ENCODE measurements at regions of chr20 and their contacts with region 1.

Region 1: GRCh38 chr20:3045816-3046676 is at the start of gene MRPS26:
- DNase-seq: peak; percentile 72 to 96 (median 92)

Region 2: DNA sequence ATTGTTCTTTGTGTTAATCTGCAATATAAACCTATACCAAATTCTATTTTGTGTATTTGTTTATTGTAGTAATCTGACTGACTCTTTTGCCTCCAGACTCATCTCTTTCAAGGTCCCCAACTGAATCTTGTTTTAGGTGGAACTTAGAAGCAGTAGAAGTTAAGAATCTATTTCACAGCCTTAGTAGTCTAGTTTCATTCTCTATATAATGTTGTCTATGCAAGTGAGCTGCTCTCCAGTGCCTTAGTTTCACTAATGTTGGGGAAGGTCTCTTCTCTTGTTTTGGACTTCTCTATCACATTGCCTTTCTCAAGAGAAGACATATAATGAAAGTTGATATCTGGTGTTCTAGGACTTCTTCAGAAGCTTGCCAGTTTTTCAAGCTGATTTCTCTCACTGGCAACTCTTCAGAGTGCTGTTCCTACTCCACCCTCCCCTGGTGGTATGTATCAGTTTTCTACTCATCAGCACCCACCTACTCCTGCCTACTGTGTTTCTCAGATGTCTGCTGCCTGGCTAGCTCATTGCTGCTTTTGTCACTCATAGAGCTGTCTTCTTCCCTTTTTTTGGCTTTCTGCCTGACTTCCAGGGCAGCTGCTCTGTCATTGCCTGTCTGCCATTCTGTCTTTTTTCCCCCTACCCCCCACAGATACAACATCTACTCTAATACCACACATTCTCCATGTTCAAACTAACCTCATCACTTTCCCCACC is 90.6 kb before region 1 on chr20:
- intact Hi-C with region 1: no loop called
- DNase-seq: peak in 26 of 42 donors; percentile 8 to 79 (median 31)

Region 3: DNA sequence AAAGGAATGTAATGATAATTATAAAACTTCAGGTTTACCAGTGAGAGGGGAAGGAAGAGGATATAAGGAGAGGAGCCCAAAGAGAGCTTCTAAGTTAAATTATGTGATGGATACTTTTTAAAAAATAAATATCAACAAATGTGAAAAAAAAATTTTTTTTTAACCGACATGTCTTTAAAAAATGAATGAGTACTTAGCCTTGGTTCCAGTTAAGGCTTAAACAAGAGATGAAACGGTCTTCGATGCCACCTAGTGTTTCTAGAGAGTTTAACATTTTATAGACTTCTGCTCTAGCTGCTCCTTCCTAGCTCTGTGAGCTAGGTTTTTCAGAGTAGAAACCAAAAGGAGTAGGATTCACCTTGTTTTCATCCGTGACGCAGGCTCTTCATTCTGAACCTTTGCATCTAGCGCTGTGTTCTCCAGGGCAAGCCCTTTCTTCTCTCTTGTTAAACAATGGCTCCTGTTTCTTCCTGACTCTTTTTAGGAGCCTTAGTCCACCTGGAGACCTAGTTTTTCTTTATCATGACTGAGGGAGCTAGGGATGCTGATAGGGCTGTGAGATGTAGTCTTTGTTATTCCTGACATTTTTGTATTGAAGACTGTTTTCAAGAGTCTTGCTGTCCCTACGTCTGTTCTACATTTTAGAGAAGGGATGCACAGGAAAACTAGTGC is 45.1 kb before region 1 on chr20:
- intact Hi-C with region 1: no loop called
- DNase-seq: peak in 17 of 42 donors; percentile 3 to 70 (median 19)

Region 4: DNA sequence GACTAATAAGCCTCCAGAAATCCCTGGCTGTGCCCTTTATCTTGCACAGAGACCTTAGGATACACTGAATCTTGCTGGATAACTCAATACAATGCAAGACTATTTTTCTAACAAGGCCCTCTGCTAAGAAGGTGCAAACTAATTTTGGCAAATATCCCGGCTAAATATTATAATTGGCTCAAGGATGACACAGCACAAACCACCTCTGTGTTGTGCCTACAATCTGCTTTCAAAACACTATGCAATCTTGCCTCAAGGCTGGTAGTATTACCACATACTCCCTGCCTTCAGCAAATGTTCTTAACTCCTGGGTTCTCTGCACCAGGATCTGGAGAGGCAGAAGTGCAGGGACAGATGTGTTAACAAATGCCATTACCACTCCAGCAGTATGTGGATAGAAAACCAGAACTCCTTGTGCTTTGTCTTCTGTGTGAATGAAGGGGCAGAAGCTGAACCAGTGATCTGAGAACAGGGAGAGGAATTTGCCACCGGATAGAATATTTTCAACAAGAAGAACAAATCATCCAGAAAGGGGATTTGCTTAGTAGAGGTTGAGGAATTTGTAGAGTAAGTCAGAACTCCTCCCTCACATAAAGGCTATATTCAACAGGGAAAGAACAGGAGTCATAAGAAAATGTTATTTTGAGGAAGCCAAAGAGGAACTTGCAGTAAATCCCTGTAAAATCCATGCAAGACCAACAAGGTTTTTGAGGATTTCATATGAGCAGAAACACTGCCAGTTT is 267.1 kb after region 1 on chr20:
- intact Hi-C with region 1: loop called (anchors 10 kb)
- DNase-seq: peak in 2 of 42 donors; percentile 13 to 44

Region 5: DNA sequence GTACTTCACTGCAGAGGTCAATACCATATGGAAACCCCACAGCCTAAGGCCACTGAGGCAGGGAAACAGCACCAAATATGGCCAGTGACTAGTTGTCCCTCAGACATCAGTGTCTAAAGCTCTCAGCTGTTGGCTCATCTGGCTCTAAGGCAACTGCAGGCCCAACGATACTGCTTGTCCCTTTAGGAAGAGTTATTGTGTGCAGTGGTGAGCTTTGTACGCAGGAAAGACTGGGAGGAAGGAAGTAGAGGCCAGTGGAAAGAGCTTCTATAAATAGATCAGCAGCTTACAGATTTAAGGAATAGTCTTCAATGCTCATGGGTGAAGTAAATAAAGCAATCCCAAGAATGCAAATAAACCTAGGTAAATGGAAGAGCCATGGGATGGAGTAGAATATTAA is 332.1 kb after region 1 on chr20:
- intact Hi-C with region 1: no loop called
- DNase-seq: no peak

Measured in head of caudate nucleus (tissue), 42 donors.